ENCODE measurements at regions of chr5 and their contacts with region 1.

Region 1: DNA sequence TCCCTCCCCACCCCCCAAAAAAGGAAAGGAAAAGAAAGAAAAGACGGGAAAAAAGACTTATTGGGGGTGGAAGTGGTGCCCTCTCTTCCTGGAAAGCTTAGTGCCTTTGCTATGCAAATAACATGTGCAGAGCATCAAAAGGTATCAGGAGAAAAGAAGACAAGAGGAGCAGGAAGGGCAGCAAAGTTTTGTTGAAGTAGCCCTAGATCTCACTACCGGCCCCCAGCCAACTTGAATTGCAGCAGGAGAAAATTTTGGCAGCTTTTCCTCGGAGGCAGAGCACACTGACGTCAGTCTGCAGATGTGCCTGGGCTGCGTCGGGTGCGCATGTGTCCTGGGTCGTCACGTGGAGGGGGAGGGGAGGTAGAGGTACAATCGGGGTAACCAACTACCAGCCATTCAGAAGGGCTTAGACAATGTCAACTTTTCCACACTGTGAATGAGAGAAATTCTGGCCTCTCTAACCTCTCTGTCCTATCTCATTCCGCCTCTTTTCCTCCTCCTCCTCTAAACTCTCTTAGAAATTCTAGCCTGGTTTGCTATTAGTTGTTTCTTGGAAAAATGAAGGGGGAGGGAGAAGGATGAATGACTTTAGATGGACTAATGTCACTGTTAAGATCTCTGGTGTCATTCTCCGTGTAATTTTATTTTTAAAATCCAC is at the start of gene ADAMTS6:
- DNase-seq: peak; percentile 82 to 93 (median 90)
- ATAC-seq: peak; percentile 88
- H3K4me3 ChIP-seq: peak within 1 kb of the TSS in 1 of 2 donors; percentile 60
- H3K27ac ChIP-seq: peak within 1 kb of the TSS; percentile 48 to 90 (median 74)
- H3K4me1 ChIP-seq: peaks cover 27% of the 10 kb centered on the region
- H3K27me3 ChIP-seq: no peaks in the 10 kb centered on the region
- CTCF ChIP-seq: no peak
- POLR2A ChIP-seq: peak in 2 of 3 donors; percentile 36 to 45
- total RNA-seq, gene ADAMTS6: 0.78 TPM in 1 of 2 donors, not detected in the other

Region 2: DNA sequence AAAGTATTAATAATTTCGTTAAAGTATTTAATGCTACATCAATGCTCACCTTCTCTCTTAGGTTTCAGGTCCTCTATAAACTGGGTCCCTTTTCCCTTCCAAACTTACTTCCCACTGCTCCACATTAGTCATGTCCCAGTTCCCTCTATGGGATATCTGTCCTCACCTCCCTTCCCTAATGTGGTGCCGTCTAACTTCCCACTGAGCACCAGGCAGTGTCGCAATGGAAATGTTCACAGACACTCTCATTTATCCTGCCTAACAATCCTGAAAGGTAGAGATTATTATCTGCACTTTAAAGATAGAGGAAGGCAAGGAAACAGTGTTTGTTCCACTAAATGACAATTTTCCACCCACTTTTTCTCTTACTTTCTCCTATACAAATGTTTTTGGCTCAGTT is 383.4 kb before region 1 on chr5:
- intact Hi-C with region 1: loop called (anchors 10 kb)
- DNase-seq: no peak
- ATAC-seq: no peak
- H3K4me3 ChIP-seq: no peak overlapping the region
- H3K27ac ChIP-seq: no peak overlapping the region
- H3K4me1 ChIP-seq: peaks cover 2% of the 10 kb centered on the region
- H3K27me3 ChIP-seq: no peaks in the 10 kb centered on the region
- CTCF ChIP-seq: no peak
- POLR2A ChIP-seq: no peak

Region 3: DNA sequence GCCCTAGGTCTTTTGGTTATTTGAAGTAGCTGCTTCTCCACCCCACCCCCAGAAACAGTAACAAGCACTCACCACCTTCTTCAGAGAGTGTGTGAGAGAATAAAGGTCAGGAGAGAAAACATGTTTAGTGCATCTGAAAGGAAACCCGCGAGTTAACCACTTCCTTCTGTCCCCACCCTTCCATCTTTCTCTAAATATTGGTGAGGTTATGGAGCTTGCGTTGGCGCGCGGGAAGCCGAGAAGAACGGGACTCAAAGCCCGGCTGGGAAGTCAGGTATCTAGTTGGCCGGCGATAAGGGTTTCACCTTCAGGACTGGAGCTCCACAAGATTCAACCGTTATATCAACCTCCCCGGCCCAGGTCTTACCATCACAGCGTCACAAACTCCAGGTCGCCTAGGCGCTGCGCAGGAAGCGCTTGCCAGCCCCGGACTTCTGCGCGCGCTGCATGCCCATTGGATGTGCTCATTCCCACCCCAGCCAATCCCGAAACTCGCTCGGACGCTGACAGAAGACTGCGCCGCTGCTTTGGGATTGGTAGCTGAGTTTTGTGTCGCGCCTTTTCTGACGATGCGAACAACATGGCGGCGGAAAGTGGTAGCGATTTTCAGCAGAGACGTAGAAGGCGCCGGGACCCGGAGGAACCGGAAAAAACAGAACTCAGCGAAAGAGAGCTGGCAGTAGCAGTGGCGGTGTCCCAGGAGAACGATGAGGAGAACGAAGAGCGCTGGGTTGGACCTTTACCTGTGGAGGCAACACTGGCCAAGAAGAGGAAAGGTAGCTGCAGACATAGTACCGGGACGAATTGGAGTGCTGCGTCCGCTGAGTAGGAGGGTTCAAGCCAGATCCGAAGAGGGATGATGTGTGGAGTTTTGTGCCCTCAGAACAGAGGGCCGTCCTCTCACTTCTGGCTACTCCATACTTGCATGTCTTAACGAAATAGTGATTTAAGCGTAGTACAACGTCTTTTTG is 81.3 kb after region 1 on chr5 and contains the starts of genes CENPK and PPWD1:
- intact Hi-C with region 1: no loop called
- DNase-seq: peak; percentile 93 to 96 (median 95)
- ATAC-seq: peak; percentile 100
- H3K4me3 ChIP-seq: peak within 1 kb of the TSS; percentile 72 to 83
- H3K27ac ChIP-seq: peak within 1 kb of the TSS; percentile 58 to 91 (median 82)
- H3K4me1 ChIP-seq: peaks cover 24% of the 10 kb centered on the region
- H3K27me3 ChIP-seq: no peaks in the 10 kb centered on the region
- CTCF ChIP-seq: peak in 1 of 7 experiments; percentile 16
- POLR2A ChIP-seq: peak in 2 of 3 donors; percentile 83 to 84
- total RNA-seq, gene CENPK: 1.3 TPM in 1 of 2 donors, not detected in the other
- total RNA-seq, gene PPWD1: 19.1 to 38.7 TPM

Measured in body of pancreas (tissue), 4 donors.